ENCODE measurements at regions of chr16 and their contacts with region 1.

Region 1: GRCh38 chr16:15427648-15428239 is 6.6 kb upstream of the BMERB1 start:
- DNase-seq: no peak
- H3K4me3 ChIP-seq: peak overlapping the region; percentile 27
- H3K27ac ChIP-seq: no peak overlapping the region
- H3K27me3 ChIP-seq: peaks cover 6% of the 10 kb centered on the region
- CTCF ChIP-seq: peak; percentile 69

Region 2: GRCh38 chr16:15404792-15405191 is 23.0 kb before region 1 on chr16:
- CTCF ChIA-PET with region 1: no interaction called
- POLR2A ChIA-PET with region 1: no interaction called
- DNase-seq: no peak
- H3K4me3 ChIP-seq: no peak overlapping the region
- H3K27ac ChIP-seq: no peak overlapping the region
- H3K27me3 ChIP-seq: no peaks in the 10 kb centered on the region
- CTCF ChIP-seq: no peak

Region 3: GRCh38 chr16:15439521-15439920 is 11.8 kb after region 1 on chr16:
- CTCF ChIA-PET with region 1: interaction called, 16 read pairs
- POLR2A ChIA-PET with region 1: no interaction called
- DNase-seq: no peak
- H3K4me3 ChIP-seq: no peak overlapping the region
- H3K27ac ChIP-seq: peak overlapping the region; percentile 68
- H3K27me3 ChIP-seq: no peaks in the 10 kb centered on the region
- CTCF ChIP-seq: no peak